HEK293 (cell line): ENCODE measurements at regions of chr9 and their contacts with region 1.

Region 1: DNA sequence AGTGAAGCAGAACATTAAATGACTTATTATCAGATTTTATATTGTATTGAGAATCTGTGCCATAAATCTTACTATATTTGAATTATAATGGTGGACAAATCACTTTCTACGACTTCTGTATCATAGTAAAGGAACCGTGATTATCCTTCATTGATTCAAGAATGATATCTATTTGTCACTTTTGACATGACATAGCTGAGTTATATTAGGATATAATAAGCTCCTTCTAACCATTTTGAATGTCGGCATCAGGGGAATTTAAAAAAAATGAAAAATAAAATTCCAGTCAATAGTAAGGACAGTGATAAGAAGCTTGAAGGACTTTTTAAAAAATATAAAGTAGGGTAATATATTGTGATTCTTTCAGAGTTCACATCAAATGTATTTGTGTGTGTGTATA is 338.9 kb upstream of the ACO1 start:
- H3K4me3 ChIP-seq: no peak overlapping the region
- H3K27ac ChIP-seq: no peak overlapping the region
- H3K4me1 ChIP-seq: no peaks in the 10 kb centered on the region
- CTCF ChIP-seq: no peak

Region 2: DNA sequence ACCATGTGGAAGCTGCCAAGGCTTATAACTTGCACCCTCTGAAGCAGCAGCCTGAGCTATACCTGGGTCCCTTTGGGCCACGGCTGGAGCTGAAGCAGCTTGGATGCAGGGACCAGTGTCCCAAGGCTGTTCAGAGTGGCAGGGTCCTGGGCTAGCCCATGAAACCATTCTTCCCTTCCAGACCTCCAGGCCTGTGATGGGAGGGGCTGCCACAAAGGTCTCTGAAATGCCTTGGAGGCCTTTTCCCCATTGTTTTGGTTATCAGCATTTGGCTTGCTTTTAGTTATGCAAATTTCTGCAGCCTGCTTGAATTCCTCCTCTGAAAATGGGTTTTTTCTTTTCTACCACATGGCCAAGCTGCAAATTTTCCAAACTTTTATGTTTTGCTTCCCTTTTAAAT is 94.8 kb before region 1 on chr9:
- CTCF ChIA-PET with region 1: no interaction called
- POLR2A ChIA-PET with region 1: no interaction called
- H3K4me3 ChIP-seq: no peak overlapping the region
- H3K27ac ChIP-seq: no peak overlapping the region
- H3K4me1 ChIP-seq: no peaks in the 10 kb centered on the region
- CTCF ChIP-seq: no peak

Region 3: DNA sequence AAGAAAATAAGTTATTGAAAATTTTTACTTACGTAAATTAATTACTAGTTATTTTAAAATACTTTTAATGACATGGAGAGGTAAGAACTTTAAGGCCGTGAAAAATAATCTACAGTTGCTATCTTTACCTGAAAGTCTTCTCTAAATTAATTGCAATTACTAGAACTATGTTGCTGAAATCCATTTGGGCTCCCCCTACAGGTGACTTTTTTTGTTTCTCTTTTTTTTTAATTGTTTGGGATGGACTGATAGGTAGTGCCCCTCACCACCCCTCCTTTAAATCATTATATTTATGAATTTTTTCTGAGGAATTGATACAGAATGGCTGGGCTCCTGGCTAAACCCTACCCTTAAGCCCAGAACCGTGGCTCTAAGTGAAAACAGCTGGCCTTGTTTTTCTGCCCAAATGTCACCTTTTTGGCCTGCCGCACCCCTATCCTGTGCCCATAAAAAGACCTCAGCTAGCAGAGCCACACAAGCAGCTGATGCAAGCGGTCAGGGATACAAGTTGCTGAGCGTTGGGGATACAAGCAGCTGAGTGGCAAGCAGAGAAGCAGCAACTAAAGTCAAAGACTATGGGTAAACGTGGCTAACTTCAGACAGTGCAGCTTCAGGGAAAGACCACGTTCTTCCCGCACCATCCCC is 23.8 kb after region 1 on chr9:
- CTCF ChIA-PET with region 1: interaction called, 10 read pairs
- POLR2A ChIA-PET with region 1: no interaction called
- H3K4me3 ChIP-seq: no peak overlapping the region
- H3K27ac ChIP-seq: no peak overlapping the region
- H3K4me1 ChIP-seq: no peaks in the 10 kb centered on the region
- CTCF ChIP-seq: no peak